Mammary epithelial cell (primary cell): ENCODE measurements at regions of chr17 and their contacts with region 1.

Region 1: GRCh38 chr17:39980351-39981206 is at the start of gene PSMD3:
- DNase-seq: peak; percentile 99
- H3K4me3 ChIP-seq: peak within 1 kb of the TSS; percentile 73 to 97 (median 90)
- H3K27ac ChIP-seq: peak within 1 kb of the TSS; percentile 90
- H3K4me1 ChIP-seq: peaks cover 19% of the 10 kb centered on the region
- H3K27me3 ChIP-seq: no peaks in the 10 kb centered on the region
- CTCF ChIP-seq: peak; percentile 69 to 79
- total RNA-seq, gene PSMD3: 112 to 159 TPM

Region 2: DNA sequence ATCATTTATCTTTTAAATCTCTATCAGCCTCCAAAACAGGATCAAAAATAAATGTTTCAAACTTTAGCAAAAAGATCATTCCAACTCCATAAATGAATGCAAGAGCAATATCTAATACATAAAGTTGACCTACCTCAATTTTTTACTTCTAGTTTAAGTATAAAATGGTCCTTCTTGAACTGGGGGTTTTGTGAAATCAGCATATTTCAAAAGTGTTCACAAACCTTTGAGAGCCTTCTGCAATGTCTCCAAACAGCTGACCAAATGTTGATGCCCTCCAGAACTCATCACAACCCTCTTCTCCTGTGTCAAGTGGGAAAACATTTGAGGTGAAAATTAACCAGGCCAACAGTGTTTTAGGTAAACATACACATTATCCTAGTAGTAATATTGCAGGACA is 537.3 kb before region 1 on chr17:
- CTCF ChIA-PET with region 1: no interaction called
- dilution Hi-C with region 1: no loop called
- in situ Hi-C with region 1: no loop called
- intact Hi-C with region 1: no loop called
- DNase-seq: no peak
- H3K4me3 ChIP-seq: no peak overlapping the region
- H3K27ac ChIP-seq: no peak overlapping the region
- H3K4me1 ChIP-seq: no peaks in the 10 kb centered on the region
- H3K27me3 ChIP-seq: no peaks in the 10 kb centered on the region
- CTCF ChIP-seq: no peak

Region 3: GRCh38 chr17:39621523-39622379 is 358.8 kb before region 1 on chr17:
- CTCF ChIA-PET with region 1: interaction called, 15 read pairs
- dilution Hi-C with region 1: no loop called
- in situ Hi-C with region 1: no loop called
- intact Hi-C with region 1: loop called (anchors 2 kb)
- DNase-seq: peak; percentile 66
- H3K4me3 ChIP-seq: no peak overlapping the region
- H3K27ac ChIP-seq: no peak overlapping the region
- H3K4me1 ChIP-seq: peaks cover 18% of the 10 kb centered on the region
- H3K27me3 ChIP-seq: peaks cover 2% of the 10 kb centered on the region
- CTCF ChIP-seq: peak; percentile 100

Region 4: GRCh38 chr17:39872751-39873150 is 107.8 kb before region 1 on chr17:
- CTCF ChIA-PET with region 1: interaction called, 6 read pairs
- dilution Hi-C with region 1: loop called (anchors 5 kb)
- in situ Hi-C with region 1: no loop called
- intact Hi-C with region 1: loop called (anchors 1 kb)
- DNase-seq: peak; percentile 32
- H3K4me3 ChIP-seq: no peak overlapping the region
- H3K27ac ChIP-seq: no peak overlapping the region
- H3K4me1 ChIP-seq: peaks cover 5% of the 10 kb centered on the region
- H3K27me3 ChIP-seq: peaks cover 8% of the 10 kb centered on the region
- CTCF ChIP-seq: peak; percentile 51 to 62

Region 5: DNA sequence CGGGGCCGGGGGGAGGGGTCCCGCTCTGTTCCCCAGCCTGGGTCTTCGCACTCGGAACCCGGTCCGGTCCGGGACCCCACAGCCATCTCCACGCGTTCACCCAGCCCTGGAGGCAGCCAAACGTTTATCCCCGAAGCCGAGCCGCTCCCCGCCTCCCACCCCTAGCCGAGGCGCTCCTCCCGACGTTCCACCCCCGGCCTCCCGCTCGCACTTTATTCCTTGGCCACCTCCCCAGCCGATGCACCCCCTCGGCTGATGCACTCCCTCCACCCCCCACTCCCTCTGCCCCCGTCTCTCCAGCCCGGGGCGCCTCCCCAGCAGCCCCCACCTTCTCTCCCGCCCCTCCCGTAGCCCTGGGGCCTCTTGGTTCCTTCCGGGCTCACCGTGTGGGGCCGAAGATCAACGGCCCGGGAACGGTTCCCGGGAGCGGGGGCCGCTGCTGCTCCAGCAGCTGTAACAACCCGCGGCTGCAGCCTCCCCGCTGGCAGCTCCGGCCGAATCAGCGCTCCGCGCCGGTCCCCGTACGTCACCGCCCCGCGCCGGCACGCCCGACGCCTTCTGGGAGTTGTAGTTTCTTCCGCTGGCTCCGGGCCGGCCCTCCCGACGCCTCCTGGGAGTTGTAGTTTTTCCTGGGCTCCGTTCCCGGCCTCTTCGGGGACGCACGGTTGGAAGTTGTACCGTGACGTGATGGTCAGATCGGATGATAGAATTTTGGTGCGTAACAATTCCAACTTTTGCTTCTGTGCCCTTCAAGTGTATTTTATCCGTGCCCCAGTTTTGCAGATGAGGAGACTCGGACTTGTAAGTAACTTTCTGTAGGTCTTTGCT is 53.3 kb before region 1 on chr17 and contains the starts of genes LRRC3C and ORMDL3:
- CTCF ChIA-PET with region 1: no interaction called
- dilution Hi-C with region 1: no loop called
- in situ Hi-C with region 1: no loop called
- intact Hi-C with region 1: loop called (anchors 1 kb)
- DNase-seq: peak; percentile 89
- H3K4me3 ChIP-seq: peak within 1 kb of the TSS; percentile 74 to 85 (median 84)
- H3K27ac ChIP-seq: peak within 1 kb of the TSS; percentile 49
- H3K4me1 ChIP-seq: peaks cover 25% of the 10 kb centered on the region
- H3K27me3 ChIP-seq: no peaks in the 10 kb centered on the region
- CTCF ChIP-seq: no peak
- total RNA-seq, gene LRRC3C: not detected
- total RNA-seq, gene ORMDL3: 36.2 to 53.3 TPM

Region 6: DNA sequence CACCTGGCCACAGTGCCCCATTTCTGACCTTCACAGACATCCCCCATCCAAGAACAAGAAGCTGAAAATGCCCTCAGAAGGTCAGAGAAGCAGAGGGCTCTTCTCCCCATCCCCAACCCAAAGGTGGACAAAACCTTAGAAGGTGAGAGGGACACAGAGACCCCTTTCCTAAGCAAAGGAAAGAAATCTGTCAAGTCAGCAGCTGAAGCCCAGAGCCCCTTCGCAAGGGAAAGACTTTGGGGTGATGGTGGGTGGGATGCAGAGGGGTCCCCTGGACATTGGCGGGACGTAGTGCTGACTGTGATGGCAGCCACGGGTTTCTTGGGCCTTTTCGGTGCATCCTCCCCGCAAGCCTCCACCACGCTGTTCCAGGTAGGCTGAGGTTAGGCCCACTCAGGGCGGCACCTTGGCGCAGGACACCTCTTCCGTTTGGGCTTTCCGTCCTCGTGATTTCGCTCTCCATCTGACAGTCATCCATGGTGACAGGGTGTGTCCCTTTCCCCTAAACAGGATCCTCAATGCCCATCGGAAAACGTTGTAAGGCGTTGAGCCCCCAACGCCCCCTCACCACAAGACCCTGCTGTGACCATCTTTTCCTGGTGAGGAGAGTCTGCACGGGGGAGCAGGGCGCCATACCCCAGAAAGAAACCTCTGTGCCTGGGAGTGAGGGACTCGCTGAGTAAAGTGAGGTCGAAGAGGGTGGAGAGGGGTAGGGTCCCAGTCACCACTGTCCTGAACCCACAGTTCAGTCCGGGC is 28.5 kb before region 1 on chr17:
- CTCF ChIA-PET with region 1: no interaction called
- dilution Hi-C with region 1: no loop called
- in situ Hi-C with region 1: no loop called
- intact Hi-C with region 1: no loop called
- DNase-seq: no peak
- H3K4me3 ChIP-seq: peak overlapping the region in 1 of 3 experiments; percentile 46
- H3K27ac ChIP-seq: no peak overlapping the region
- H3K4me1 ChIP-seq: peaks cover 10% of the 10 kb centered on the region
- H3K27me3 ChIP-seq: no peaks in the 10 kb centered on the region
- CTCF ChIP-seq: no peak

Region 7: GRCh38 chr17:39963829-39964228 is 16.8 kb before region 1 on chr17:
- CTCF ChIA-PET with region 1: interaction called, 12 read pairs
- dilution Hi-C with region 1: no loop called
- in situ Hi-C with region 1: no loop called
- intact Hi-C with region 1: loop called (anchors 1 kb)
- DNase-seq: peak; percentile 93
- H3K4me3 ChIP-seq: no peak overlapping the region
- H3K27ac ChIP-seq: no peak overlapping the region
- H3K4me1 ChIP-seq: peaks cover 25% of the 10 kb centered on the region
- H3K27me3 ChIP-seq: no peaks in the 10 kb centered on the region
- CTCF ChIP-seq: no peak

Region 8: GRCh38 chr17:40026816-40027613 is 46.4 kb after region 1 on chr17:
- CTCF ChIA-PET with region 1: no interaction called
- dilution Hi-C with region 1: no loop called
- in situ Hi-C with region 1: no loop called
- intact Hi-C with region 1: loop called (anchors 1 kb)
- DNase-seq: peak; percentile 76
- H3K4me3 ChIP-seq: no peak overlapping the region
- H3K27ac ChIP-seq: peak overlapping the region; percentile 87
- H3K4me1 ChIP-seq: peaks cover 60% of the 10 kb centered on the region
- H3K27me3 ChIP-seq: no peaks in the 10 kb centered on the region
- CTCF ChIP-seq: peak; percentile 77 to 91